HEK293 (cell line): ENCODE measurements at regions of chr12 and their contacts with region 1.

Region 1: GRCh38 chr12:49322708-49323523 is at the start of gene TROAP:
- H3K4me3 ChIP-seq: peak within 1 kb of the TSS; percentile 73
- H3K27ac ChIP-seq: peak within 1 kb of the TSS; percentile 46
- H3K4me1 ChIP-seq: 0 out of 2 replicates have a peak, but pooled peaks cover 4% of the 10 kb centered on the region
- CTCF ChIP-seq: no peak

Region 2: DNA sequence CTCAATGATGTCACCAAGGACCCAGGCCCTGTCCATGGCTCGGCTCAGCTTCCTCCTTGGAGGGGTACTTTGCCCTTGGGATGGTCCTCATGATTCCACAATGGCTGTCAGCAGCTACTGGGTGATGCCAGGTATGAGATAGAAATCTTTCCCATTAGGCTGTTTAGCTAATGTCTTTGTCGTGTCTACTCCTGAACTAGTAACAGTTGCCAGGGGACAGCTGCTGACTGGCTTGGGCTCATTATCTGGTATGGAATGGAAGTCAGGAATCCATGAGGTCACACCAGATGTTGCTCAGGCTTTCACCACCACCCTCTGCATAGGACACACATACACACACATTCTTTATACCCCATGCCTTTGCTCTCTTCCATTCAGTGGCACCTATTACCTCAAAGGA is 18.8 kb before region 1 on chr12:
- CTCF ChIA-PET with region 1: interaction called, 4 read pairs
- POLR2A ChIA-PET with region 1: interaction called, 15 read pairs
- H3K4me3 ChIP-seq: no peak overlapping the region
- H3K27ac ChIP-seq: no peak overlapping the region
- H3K4me1 ChIP-seq: no peaks in the 10 kb centered on the region
- CTCF ChIP-seq: no peak

Region 3: GRCh38 chr12:49336645-49337584 is 14.0 kb after region 1 on chr12 and contains the start of gene C1QL4:
- CTCF ChIA-PET with region 1: interaction called, 28 read pairs
- POLR2A ChIA-PET with region 1: interaction called, 82 read pairs
- H3K4me3 ChIP-seq: peak within 1 kb of the TSS; percentile 49
- H3K27ac ChIP-seq: no peak within 1 kb of the TSS; the same call in 1 of the 2 replicates
- H3K4me1 ChIP-seq: peaks cover 9% of the 10 kb centered on the region; the same call in 1 of the 2 replicates
- CTCF ChIP-seq: peak; percentile 85

Region 4: DNA sequence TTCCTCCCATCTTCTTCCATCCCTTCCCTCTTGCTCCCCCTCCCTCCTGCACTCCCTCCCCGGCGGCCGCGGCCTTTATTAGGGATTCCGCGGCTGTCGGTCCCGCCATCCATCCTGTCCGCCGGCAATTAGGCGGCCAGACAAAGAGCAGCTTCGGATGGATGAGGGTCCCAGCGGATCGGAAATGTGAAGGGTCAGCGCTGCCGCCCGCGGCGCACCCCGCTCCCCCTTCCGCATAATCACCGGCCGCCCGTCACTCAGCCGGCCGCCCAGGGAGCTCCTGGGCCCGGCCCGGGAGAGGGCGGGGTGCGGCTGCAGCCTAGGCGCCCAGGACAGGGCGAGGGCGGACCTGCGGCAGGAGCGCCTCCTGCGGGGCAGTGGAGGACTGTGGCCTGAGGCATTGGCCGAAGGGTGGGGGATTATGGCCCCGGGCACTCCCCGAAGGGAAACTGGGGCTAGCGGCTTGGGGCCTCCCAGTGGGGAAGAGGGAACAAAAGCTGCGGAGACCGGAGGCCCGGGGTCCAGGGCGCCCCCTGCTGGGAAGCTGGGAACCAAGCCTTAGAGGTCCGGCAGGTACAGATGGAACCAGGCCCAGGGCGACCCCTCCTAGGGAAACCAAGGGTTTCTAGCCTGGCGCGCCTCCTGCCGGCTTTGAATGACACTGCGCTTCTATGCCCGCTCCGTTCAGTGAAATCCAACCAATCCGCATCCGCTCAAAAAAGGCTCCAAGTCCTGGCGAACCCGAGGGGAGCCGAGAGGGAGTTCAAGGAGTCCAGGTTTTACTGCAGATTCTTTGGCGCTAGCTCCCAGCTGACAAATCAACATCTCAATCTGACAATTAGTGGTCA is 19.4 kb after region 1 on chr12:
- CTCF ChIA-PET with region 1: interaction called, 28 read pairs
- POLR2A ChIA-PET with region 1: interaction called, 82 read pairs
- H3K4me3 ChIP-seq: peak overlapping the region; percentile 20
- H3K27ac ChIP-seq: peak overlapping the region; percentile 21; the same call in 1 of the 2 replicates
- H3K4me1 ChIP-seq: peaks cover 22% of the 10 kb centered on the region
- CTCF ChIP-seq: peak; percentile 88

Region 5: DNA sequence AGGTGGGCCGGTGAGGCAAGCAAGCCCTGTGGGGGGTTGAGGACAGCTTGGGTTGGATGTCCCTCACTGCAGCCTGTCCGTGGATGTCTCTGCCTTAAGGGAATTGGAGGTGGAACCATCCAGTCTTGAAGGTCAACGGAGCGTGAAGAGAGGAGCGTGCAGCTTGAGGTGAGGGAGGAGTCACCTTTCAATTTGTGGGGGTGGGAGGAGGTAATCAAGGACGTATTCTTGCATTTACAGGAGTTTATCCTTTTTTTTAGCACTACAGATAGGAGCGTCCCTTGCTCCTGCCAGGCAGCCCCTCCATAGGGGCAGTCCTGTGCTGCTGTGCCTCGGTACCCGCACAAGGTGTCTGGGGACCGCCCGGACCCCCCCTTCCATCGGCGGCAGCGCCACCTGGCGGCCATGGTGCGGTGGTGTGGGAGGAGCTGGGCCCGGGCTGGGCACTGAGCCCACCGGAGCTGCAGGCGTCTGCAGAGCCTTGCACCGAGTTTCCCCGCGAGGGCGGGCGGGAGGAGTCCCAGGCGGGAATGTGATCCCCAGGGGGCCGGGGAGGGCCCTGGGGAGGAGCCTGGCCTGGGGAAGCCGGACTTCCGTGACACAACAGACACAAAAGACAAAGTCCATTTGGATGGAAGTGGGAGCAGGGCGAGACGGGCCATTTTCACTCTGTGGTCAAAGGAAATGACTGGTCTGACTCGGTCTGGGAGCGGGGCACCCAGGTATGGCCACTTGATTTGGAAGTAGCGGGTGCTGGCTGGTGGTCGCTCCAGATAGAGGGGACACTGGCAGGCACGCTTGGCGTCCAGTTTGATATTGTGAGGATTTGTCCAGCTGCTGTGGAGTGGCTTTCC is 24.7 kb after region 1 on chr12:
- CTCF ChIA-PET with region 1: interaction called, 28 read pairs
- POLR2A ChIA-PET with region 1: interaction called, 21 read pairs
- H3K4me3 ChIP-seq: peak overlapping the region; percentile 32
- H3K27ac ChIP-seq: peak overlapping the region; percentile 80; the same call in 1 of the 2 replicates
- H3K4me1 ChIP-seq: peaks cover 21% of the 10 kb centered on the region
- CTCF ChIP-seq: peak; percentile 97

Region 6: GRCh38 chr12:49422114-49422513 is 99.2 kb after region 1 on chr12:
- CTCF ChIA-PET with region 1: no interaction called
- POLR2A ChIA-PET with region 1: no interaction called
- H3K4me3 ChIP-seq: no peak overlapping the region
- H3K27ac ChIP-seq: no peak overlapping the region
- H3K4me1 ChIP-seq: peaks cover 12% of the 10 kb centered on the region
- CTCF ChIP-seq: no peak